ENCODE measurements at regions of chr10 and their contacts with region 1.

Region 1: DNA sequence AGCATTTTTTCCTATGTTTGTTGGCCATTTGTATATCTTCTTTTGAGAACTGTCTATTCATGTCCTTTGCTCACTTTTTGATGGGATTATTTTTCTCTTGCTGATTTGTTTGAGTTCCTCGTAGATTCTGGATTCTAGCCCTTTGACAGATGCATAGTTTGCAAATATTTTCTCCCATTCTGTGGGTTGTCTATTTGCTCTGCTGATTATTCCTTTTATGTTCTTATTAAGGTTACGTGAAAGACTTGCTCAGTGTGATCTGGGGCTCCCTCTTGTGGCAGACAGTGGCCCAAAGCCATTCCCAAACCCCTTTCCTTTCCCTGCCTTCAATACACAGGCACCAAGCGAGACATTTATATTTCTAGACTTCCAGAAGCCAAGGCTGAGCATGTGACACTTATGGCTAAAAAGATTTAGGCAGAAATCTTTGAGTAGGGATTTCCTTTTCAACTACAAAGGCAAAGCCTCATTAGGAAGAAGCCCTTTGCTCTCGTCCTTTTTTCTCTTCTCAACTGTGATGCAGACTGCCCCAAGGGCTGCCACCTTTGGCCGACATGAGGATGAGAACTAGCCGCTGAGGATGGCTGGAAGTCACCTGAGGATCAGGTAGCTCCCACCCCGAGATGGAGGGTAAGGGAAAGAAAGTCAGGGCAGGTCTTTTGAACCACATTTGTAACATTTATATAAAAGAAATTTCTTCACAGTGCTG is 23.6 kb downstream of the ST8SIA6 start:
- DNase-seq: peak; percentile 61
- H3K4me3 ChIP-seq: no peak overlapping the region; a peak in 1 of 4 replicates
- H3K27ac ChIP-seq: no peak overlapping the region
- H3K4me1 ChIP-seq: no peaks in the 10 kb centered on the region
- H3K27me3 ChIP-seq: no peaks in the 10 kb centered on the region; the same call in 1 of the 2 replicates
- CTCF ChIP-seq: peak; percentile 97
- EP300 ChIP-seq: no peak
- RAD21 ChIP-seq: peak; percentile 84

Region 2: DNA sequence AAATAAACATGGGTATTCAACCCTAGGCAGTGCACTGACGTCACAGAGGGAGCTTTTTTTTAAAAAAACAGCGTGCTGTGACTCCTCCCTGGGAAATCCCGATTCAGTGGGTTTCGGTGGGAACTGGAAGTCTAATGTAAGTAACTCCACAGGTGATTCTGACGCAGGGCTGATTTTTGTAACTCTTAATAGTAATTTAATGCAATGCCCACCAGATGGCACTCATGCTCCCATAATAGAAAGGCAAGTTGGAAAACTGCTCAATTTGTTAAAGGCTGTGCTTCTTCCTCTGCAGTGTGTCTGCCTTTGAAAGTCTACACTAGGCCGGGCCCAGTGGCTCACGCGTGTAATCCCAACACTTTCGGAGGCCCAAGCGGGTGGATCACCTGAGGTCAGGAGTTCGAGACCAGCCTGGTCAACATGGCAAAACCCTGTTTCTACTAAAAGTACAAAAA is 602.7 kb before region 1 on chr10:
- CTCF ChIA-PET with region 1: interaction called, 10 read pairs
- POLR2A ChIA-PET with region 1: no interaction called
- DNase-seq: peak; percentile 27
- H3K4me3 ChIP-seq: peak overlapping the region; percentile 23 to 24; a peak in 3 of 4 replicates
- H3K27ac ChIP-seq: peak overlapping the region in 1 of 2 experiments; percentile 95; a peak in 3 of 4 replicates
- H3K4me1 ChIP-seq: peaks cover 0 to 25% of the 10 kb centered on the region in 2 experiments; a peak in 2 of 4 replicates
- H3K27me3 ChIP-seq: no peaks in the 10 kb centered on the region
- CTCF ChIP-seq: peak; percentile 61
- EP300 ChIP-seq: no peak
- RAD21 ChIP-seq: peak; percentile 84

Region 3: DNA sequence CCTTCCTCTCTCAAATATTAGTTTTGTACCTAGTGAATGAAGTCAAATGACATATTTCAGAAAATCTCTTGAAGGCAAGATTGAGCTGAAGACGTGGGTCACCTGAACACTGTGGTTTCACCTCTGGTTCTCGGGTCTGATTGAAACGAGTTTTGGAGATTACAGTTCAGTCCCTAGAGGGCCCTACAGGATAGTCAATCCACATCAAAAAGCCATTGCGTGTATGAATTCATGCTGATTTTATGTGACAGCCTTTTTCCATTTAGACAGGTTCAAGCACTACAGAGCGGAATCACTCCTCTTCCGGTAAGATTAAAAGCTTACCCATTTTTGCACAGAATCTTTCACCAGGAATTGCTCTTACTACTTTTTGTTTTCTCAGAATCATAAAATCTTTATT is 140.6 kb before region 1 on chr10:
- CTCF ChIA-PET with region 1: interaction called, 44 read pairs
- POLR2A ChIA-PET with region 1: no interaction called
- DNase-seq: peak; percentile 40
- H3K4me3 ChIP-seq: no peak overlapping the region
- H3K27ac ChIP-seq: no peak overlapping the region
- H3K4me1 ChIP-seq: no peaks in the 10 kb centered on the region
- H3K27me3 ChIP-seq: no peaks in the 10 kb centered on the region; the same call in 1 of the 2 replicates
- CTCF ChIP-seq: peak; percentile 51
- EP300 ChIP-seq: no peak
- RAD21 ChIP-seq: peak; percentile 83

Region 4: GRCh38 chr10:17527516-17528146 is 96.8 kb after region 1 on chr10:
- CTCF ChIA-PET with region 1: no interaction called
- POLR2A ChIA-PET with region 1: no interaction called
- DNase-seq: no peak
- H3K4me3 ChIP-seq: no peak overlapping the region
- H3K27ac ChIP-seq: peak overlapping the region in 1 of 2 experiments; percentile 31; a peak in 2 of 4 replicates
- H3K4me1 ChIP-seq: no peaks in the 10 kb centered on the region; a peak in 1 of 4 replicates
- H3K27me3 ChIP-seq: no peaks in the 10 kb centered on the region
- CTCF ChIP-seq: no peak
- EP300 ChIP-seq: no peak
- RAD21 ChIP-seq: no peak

Measured in SK-N-SH (cell line).